ENCODE measurements at regions of chr7 and their contacts with region 1.

Region 1: DNA sequence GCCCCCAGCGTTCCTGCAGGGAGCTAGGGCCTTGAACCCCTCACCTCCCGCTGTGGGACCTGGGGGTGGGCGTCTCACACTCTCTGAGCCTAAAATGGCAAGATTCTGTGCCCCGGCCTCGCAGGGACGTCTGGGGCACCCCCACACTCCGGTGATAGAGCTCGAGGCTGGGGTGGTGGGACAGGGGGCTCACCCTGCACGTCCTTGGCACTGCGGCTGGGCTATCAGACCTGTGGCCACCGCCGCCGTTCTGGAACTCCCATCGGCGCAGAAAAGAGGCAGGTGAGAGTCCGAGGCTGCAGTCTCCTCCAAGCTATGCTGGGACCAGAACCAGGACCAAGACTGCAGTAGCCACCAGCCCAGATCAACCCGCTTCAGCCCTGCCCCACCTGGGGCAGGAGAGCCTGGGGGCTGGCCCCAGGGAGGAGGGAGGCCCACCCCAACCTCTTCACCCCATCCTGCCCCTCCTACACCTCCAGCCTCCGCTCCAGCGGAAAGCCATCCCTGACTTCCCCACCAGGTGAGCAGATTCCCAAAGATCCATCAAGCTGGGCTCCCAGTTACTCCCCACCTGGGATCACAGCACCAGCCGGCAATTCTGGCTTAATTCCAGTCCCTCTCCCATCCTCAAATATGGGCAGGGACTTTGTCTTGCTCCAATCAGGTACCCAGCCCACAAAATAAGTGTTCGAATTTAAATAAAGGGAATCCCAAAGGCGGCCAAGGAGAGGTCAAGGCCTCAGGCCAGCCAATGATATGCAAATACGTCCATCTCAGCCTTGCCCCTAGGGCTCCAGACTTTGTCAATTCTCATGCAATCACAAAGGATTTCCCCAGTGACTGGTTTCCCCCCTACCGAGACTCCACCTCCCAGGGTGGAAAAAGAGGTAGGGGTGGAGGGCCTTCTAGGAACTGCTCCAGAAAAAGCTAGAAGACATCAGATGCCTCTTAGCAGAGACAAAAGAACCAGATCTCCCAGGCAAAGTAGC is 16.4 kb downstream of the TNRC18 start:
- DNase-seq: no peak
- H3K4me3 ChIP-seq: no peak overlapping the region
- H3K4me3 Mint-ChIP-seq: no peak overlapping the region
- H3K27ac Mint-ChIP-seq: peak overlapping the region; percentile 65
- H3K4me1 ChIP-seq: 0 out of 2 replicates have a peak, but pooled peaks cover 5% of the 10 kb centered on the region
- H3K4me1 Mint-ChIP-seq: peaks cover 20% of the 10 kb centered on the region
- H3K27me3 ChIP-seq: no peaks in the 10 kb centered on the region
- H3K27me3 Mint-ChIP-seq: no peaks in the 10 kb centered on the region
- CTCF ChIP-seq: no peak

Region 2: GRCh38 chr7:5200561-5201270 is 206.5 kb before region 1 on chr7:
- CTCF ChIA-PET with region 1: no interaction called
- POLR2A ChIA-PET with region 1: no interaction called
- intact Hi-C with region 1: no loop called
- DNase-seq: no peak
- H3K4me3 ChIP-seq: no peak overlapping the region
- H3K4me3 Mint-ChIP-seq: no peak overlapping the region
- H3K27ac Mint-ChIP-seq: peak overlapping the region; percentile 35
- H3K4me1 ChIP-seq: peaks cover 8% of the 10 kb centered on the region; the same call in 1 of the 2 replicates
- H3K4me1 Mint-ChIP-seq: no peaks in the 10 kb centered on the region
- H3K27me3 ChIP-seq: no peaks in the 10 kb centered on the region
- H3K27me3 Mint-ChIP-seq: no peaks in the 10 kb centered on the region
- CTCF ChIP-seq: no peak

Region 3: DNA sequence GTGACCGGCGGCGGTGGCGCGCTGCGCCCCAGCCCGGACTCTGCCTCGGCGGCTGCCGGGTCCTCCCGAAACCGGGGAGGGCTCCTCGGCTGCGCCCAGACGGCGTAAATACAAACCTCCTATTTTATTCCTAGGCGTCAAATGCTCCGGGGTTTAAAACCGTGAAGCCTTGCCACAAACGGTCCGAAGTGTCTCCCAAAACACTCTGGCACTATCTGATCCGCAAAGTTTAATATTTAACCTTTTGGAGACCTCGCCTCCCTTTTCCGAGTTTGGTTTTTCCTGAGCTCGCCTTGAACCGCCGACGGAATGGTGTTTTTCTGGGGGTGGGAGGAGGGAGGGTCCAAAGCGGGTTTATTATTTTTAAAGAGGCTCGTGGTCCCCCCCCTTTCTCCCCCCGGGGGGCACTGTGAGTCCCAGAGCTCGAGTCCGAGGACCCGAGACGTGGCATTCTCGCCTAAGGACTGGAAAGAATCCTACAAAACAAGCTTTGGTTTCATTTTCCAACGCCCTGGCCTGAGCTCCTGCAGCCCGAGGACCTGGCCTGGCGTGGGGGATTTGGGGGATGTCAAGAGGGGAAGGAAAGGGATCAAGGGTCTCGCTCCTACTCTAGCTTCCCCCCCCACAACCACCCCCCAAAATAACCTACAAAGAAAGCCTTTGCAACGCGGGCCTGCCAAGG is 14.6 kb after region 1 on chr7:
- CTCF ChIA-PET with region 1: interaction called, 6 read pairs
- POLR2A ChIA-PET with region 1: interaction called, 12 read pairs
- intact Hi-C with region 1: no loop called
- DNase-seq: peak; percentile 82 to 90
- H3K4me3 ChIP-seq: peak overlapping the region; percentile 80
- H3K4me3 Mint-ChIP-seq: peak overlapping the region; percentile 91
- H3K27ac Mint-ChIP-seq: peak overlapping the region; percentile 97
- H3K4me1 ChIP-seq: peaks cover 18% of the 10 kb centered on the region
- H3K4me1 Mint-ChIP-seq: peaks cover 12% of the 10 kb centered on the region
- H3K27me3 ChIP-seq: no peaks in the 10 kb centered on the region
- H3K27me3 Mint-ChIP-seq: no peaks in the 10 kb centered on the region
- CTCF ChIP-seq: no peak

Measured in Caco-2 (cell line).